Ovary (tissue), 10 donors: ENCODE measurements at regions of chr18 and their contacts with region 1.

Region 1: GRCh38 chr18:28922936-28923335 is 746.0 kb upstream of the CDH2 start:
- DNase-seq: no peak
- H3K4me3 ChIP-seq: no peak overlapping the region
- H3K27ac ChIP-seq: no peak overlapping the region
- H3K4me1 ChIP-seq: no peaks in the 10 kb centered on the region
- H3K27me3 ChIP-seq: no peaks in the 10 kb centered on the region
- CTCF ChIP-seq: no peak
- EP300 ChIP-seq: no peak
- POLR2A ChIP-seq: no peak

Region 2: GRCh38 chr18:28691496-28691840 is 231.5 kb before region 1 on chr18:
- intact Hi-C with region 1: no loop called
- DNase-seq: no peak
- H3K4me3 ChIP-seq: no peak overlapping the region
- H3K27ac ChIP-seq: no peak overlapping the region
- H3K4me1 ChIP-seq: no peaks in the 10 kb centered on the region
- H3K27me3 ChIP-seq: no peaks in the 10 kb centered on the region
- CTCF ChIP-seq: no peak
- EP300 ChIP-seq: no peak
- POLR2A ChIP-seq: no peak

Region 3: GRCh38 chr18:28984731-28985130 is 61.8 kb after region 1 on chr18:
- intact Hi-C with region 1: loop called in 1 of 4 experiments (anchors 5 kb)
- DNase-seq: no peak
- H3K4me3 ChIP-seq: no peak overlapping the region
- H3K27ac ChIP-seq: no peak overlapping the region
- H3K4me1 ChIP-seq: no peaks in the 10 kb centered on the region
- H3K27me3 ChIP-seq: no peaks in the 10 kb centered on the region
- CTCF ChIP-seq: no peak
- EP300 ChIP-seq: no peak
- POLR2A ChIP-seq: no peak

Region 4: DNA sequence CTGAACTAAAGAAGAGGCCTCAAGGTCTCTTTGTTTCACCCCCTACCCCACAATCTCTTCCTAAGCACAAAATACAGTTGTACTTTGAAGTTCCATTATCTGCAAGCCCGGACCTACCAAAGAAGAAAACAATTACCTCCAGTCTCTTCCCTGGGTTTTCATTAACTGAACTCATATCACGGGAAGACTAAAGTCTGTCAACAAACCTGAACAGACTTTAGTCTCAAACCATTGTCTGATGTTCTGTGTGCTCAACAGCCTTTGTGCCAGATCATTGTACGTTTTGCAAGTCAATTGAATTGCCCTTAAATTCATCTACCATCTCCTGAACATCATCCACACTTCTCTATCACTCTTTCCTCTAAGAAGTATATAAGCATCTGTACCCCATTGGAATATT is 275.9 kb after region 1 on chr18:
- intact Hi-C with region 1: loop called in 1 of 4 experiments (anchors 10 kb)
- DNase-seq: no peak
- H3K4me3 ChIP-seq: no peak overlapping the region
- H3K27ac ChIP-seq: no peak overlapping the region
- H3K4me1 ChIP-seq: no peaks in the 10 kb centered on the region
- H3K27me3 ChIP-seq: no peaks in the 10 kb centered on the region
- CTCF ChIP-seq: no peak
- EP300 ChIP-seq: no peak
- POLR2A ChIP-seq: no peak